GM13976 (cell line): ENCODE measurements at regions of chrX and their contacts with region 1.

Region 1: DNA sequence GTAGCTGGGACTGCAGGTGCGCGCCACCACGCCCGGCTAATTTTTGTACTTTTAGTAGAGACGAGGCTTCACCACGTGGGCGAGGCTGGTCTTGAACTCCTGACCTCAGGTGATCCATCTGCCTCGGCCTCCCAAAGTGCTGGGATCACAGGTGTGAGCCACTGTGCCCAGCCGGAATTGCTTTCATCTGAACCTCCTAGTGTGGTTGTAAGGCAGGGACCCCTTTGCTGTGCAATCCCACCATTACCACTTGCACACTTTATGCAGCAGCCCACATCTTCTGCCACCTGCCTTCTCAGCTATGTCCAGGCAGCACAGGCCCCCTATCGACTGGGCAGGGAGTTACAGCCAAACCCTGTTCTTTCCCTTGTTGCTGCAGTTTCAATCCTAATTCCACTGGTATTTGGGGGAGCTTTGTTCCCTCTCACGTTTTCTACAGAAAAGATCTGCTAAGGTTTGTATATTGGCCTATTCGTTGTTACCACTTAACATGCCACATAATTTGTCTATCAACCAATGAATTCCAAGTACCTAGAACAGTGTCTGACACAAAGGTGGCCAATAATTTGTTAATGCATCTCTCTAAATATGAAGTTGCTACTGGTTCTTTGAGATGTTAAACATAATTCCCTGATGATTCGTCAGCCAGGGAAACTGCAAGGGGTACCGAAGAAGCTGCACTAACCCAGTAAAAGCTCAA is 6.5 kb downstream of the RPL39 start:
- DNase-seq: peak; percentile 44
- CTCF ChIP-seq: peak; percentile 57

Region 2: GRCh38 chrX:119516157-119516702 is 268.7 kb before region 1 on chrX:
- in situ Hi-C with region 1: loop called (anchors 10 kb)
- DNase-seq: peak; percentile 81
- CTCF ChIP-seq: peak; percentile 86